Common myeloid progenitor, CD34-positive (primary cell): ENCODE measurements at regions of chr6 and their contacts with region 1.

Region 1: DNA sequence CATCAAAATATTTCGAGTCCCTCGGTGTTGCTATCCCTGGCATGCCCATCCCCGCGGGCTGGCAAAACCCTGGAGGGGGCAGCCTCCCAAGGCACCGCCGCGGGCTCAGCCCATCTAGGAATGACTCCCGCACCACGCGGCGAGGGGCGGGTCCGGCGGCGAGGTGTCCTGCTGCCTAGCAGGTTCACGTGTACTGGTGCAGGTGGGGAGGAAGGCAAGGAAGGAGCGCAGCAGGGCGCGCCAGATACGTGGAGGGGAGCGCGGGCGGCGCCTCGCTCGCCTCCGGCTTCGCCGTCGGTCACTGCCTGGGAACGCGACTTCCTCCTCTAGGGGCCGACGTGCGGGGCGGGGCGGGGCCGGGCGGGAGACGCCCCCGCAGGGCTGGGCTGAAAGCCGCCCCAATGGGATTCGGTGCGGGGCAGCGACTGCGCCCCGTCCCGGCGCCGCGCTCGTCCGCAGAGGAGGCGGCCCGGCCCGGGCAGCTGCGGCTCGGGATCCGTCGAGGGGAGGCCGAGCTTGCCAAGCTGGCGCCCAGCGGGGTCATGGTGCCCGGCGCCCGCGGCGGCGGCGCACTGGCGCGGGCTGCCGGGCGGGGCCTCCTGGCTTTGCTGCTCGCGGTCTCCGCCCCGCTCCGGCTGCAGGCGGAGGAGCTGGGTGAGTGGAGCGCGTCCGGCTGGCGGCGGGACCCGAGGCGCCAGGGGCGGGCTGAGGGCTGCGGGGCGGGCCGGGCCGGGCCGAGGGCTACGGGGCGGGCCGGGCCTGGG is at the start of gene DCBLD1:
- DNase-seq: peak; percentile 47 to 72 (median 62)
- H3K4me3 ChIP-seq: peak within 1 kb of the TSS; percentile 37 to 86 (median 74)
- H3K27ac ChIP-seq: no peak within 1 kb of the TSS
- H3K4me1 ChIP-seq: peaks cover 4 to 23% (median 20%) of the 10 kb centered on the region in 4 experiments
- H3K27me3 ChIP-seq: peaks cover 21 to 70% (median 27%) of the 10 kb centered on the region in 5 experiments

Region 2: GRCh38 chr6:117126213-117126612 is 356.2 kb before region 1 on chr6:
- CTCF ChIA-PET with region 1: no interaction called
- POLR2A ChIA-PET with region 1: no interaction called
- DNase-seq: no peak
- H3K4me3 ChIP-seq: no peak overlapping the region
- H3K27ac ChIP-seq: no peak overlapping the region
- H3K4me1 ChIP-seq: no peaks in the 10 kb centered on the region
- H3K27me3 ChIP-seq: no peaks in the 10 kb centered on the region

Region 3: GRCh38 chr6:117469356-117469755 is 13.1 kb before region 1 on chr6:
- CTCF ChIA-PET with region 1: interaction called, 13 read pairs
- POLR2A ChIA-PET with region 1: no interaction called
- DNase-seq: peak in 2 of 3 donors; percentile 69 to 73
- H3K4me3 ChIP-seq: no peak overlapping the region
- H3K27ac ChIP-seq: no peak overlapping the region
- H3K4me1 ChIP-seq: peaks cover 0 to 10% (median 7%) of the 10 kb centered on the region in 4 experiments
- H3K27me3 ChIP-seq: peaks cover 0 to 3% (median 0%) of the 10 kb centered on the region in 5 experiments

Region 4: DNA sequence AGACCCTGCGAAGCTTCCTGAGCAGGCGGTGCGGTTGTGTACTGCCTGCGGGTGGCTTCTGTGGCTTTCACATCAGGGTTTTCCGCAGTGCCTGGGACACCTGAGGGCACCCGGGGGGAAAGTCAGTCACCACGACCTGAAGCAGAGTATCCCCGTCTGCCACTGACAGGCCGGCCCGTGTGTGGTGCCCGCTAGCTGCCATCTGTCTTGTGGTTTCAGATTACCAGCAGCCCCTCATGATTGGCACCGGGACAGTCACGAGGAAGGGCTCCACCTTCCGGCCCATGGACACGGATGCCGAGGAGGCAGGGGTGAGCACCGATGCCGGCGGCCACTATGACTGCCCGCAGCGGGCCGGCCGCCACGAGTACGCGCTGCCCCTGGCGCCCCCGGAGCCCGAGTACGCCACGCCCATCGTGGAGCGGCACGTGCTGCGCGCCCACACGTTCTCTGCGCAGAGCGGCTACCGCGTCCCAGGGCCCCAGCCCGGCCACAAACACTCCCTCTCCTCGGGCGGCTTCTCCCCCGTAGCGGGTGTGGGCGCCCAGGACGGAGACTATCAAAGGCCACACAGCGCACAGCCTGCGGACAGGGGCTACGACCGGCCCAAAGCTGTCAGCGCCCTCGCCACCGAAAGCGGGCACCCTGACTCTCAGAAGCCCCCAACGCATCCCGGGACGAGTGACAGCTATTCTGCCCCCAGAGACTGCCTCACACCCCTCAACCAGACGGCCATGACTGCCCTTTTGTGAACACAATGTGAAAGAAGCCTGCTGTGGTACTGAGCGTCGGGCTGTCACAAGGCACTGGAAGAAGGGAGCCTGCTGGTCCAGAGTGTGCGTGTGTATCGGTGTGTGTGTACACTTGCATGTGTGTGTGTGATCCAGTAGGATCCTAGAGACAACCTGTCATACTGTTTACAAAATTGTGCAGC is 65.5 kb after region 1 on chr6:
- CTCF ChIA-PET with region 1: interaction called, 18 read pairs
- POLR2A ChIA-PET with region 1: no interaction called
- DNase-seq: peak; percentile 51 to 94 (median 90)
- H3K4me3 ChIP-seq: peak overlapping the region in 6 of 7 experiments; percentile 27 to 69 (median 48)
- H3K27ac ChIP-seq: no peak overlapping the region
- H3K4me1 ChIP-seq: peaks cover 6 to 26% (median 17%) of the 10 kb centered on the region in 4 experiments
- H3K27me3 ChIP-seq: peaks cover 0 to 7% (median 0%) of the 10 kb centered on the region in 5 experiments

Region 5: DNA sequence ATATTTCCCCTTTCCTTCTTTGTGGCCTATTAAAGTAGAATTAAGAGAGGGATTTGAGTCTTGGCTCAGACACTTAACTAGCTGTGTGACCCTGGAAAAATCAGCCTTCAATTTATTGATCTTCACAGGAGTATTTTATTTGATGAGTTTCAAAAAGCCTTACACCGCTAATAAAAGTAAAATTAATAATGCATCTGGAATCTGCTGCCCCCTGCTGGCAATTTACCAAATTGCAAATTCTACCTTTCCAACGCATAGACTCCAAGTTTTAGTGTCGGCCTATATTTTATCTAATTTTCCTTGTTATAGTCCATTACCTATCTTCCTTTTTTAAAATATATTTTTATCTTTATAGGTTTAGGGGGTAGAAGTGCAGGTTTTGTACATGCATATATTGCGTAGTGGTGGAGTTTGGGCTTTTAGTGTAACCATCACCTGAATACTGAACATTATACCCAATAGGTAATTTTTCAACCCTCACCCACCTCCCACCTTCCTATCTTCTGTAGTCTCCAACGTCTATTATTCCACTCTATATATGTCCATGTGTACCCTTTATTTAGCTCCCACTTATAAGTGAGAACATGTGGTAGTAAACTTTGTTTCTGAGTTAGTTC is 73.6 kb after region 1 on chr6:
- CTCF ChIA-PET with region 1: interaction called, 71 read pairs
- POLR2A ChIA-PET with region 1: no interaction called
- DNase-seq: peak; percentile 30 to 66 (median 50)
- H3K4me3 ChIP-seq: no peak overlapping the region
- H3K27ac ChIP-seq: no peak overlapping the region
- H3K4me1 ChIP-seq: peaks cover 0 to 8% (median 2%) of the 10 kb centered on the region in 4 experiments
- H3K27me3 ChIP-seq: peaks cover 0 to 2% (median 0%) of the 10 kb centered on the region in 5 experiments

Region 6: DNA sequence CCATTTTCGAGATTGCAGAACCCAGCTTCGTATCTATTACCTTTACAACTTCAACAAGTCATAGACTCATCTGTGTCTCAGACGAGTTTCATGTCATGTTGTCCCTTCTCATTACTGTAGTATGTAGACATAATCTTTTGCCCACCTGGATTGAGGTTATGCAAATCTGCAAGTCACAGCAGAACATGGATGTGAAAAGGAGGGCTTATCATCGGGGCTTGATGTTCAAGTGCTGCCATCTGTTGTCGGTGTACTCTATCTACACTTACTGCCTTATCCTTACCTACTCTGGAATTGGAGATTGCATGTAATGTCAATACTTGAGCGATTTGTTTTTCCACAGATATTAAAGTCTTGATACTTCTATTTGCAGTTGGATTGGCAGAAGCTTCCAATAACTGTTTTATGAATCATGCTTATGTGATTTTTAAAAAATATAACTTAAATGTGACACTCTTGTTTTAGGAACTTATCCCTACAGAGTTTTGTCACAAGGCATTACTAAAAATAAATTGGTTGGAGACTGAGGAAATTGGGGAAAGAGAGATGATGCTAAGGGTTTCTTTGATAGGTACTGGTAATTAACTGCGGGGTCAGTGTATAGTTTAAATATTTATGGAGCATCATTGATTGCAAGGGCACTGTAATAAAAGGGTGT is 122.9 kb after region 1 on chr6:
- CTCF ChIA-PET with region 1: interaction called, 11 read pairs
- POLR2A ChIA-PET with region 1: interaction called, 4 read pairs
- DNase-seq: peak; percentile 79 to 88 (median 88)
- H3K4me3 ChIP-seq: no peak overlapping the region
- H3K27ac ChIP-seq: no peak overlapping the region
- H3K4me1 ChIP-seq: peaks cover 7 to 23% (median 9%) of the 10 kb centered on the region in 4 experiments
- H3K27me3 ChIP-seq: peaks cover 0 to 4% (median 0%) of the 10 kb centered on the region in 5 experiments